Activated CD4-positive, alpha-beta memory T cell treated with anti-CD3 and anti-CD28 coated beads for 36 hours (primary cell): ENCODE measurements at regions of chr17 and their contacts with region 1.

Region 1: GRCh38 chr17:42517516-42517915 is 18.5 kb upstream of the NAGLU start:
- DNase-seq: peak; percentile 88
- H3K4me3 Mint-ChIP-seq: no peak overlapping the region
- H3K27ac Mint-ChIP-seq: no peak overlapping the region
- H3K4me1 Mint-ChIP-seq: no peaks in the 10 kb centered on the region
- H3K27me3 Mint-ChIP-seq: no peaks in the 10 kb centered on the region

Region 2: DNA sequence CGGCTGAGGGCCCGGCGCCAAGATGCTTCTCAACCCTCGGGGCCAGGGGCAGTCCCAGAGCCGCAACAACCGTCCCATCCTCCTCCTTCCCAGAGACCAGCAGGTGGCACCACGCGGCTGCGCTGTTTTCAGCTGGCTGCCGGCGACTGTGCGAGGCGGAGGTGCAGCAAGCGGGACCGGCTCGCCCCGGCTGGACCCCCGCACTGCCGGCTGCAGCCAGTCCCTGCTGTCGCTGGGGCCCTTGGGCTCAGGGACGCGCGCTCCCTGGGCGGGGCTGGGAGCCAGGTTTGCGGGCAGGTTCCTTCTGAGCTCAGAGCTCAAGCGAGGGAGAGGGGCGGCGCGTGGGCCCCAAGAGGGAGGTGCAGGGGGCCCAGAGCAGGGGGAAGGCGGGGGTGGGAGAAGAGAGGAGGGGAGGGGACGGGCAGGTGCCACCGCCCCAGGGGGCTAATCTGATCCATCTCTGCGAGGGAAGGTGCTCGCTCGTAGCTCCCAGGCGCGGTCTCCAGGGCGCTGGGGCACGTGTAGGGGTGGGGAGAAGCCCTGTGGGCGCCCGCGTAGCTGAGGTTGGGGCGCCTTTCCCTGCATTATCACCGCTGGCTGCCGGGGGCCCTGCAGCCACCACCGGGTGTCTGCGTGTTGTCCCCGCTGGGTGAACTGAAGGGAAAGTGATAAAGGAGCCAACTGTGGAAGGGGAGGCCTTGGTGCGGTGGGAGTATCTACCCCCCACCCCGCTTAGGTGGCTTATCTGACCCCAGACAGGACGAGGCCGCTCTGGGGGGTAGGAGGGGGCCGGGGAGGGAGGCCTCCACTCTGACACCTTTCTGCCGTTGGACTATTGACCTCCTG is 205.0 kb before region 1 on chr17:
- CTCF ChIA-PET with region 1: interaction called, 5 read pairs
- POLR2A ChIA-PET with region 1: no interaction called
- intact Hi-C with region 1: loop called (anchors 5 kb)
- DNase-seq: peak; percentile 92
- H3K4me3 Mint-ChIP-seq: peak overlapping the region; percentile 42
- H3K27ac Mint-ChIP-seq: peak overlapping the region; percentile 74
- H3K4me1 Mint-ChIP-seq: peaks cover 76% of the 10 kb centered on the region
- H3K27me3 Mint-ChIP-seq: no peaks in the 10 kb centered on the region

Region 3: GRCh38 chr17:42414704-42415409 is 102.7 kb before region 1 on chr17:
- CTCF ChIA-PET with region 1: interaction called, 13 read pairs
- POLR2A ChIA-PET with region 1: no interaction called
- intact Hi-C with region 1: no loop called
- DNase-seq: peak; percentile 87
- H3K4me3 Mint-ChIP-seq: peak overlapping the region; percentile 49
- H3K27ac Mint-ChIP-seq: peak overlapping the region; percentile 69
- H3K4me1 Mint-ChIP-seq: peaks cover 17% of the 10 kb centered on the region
- H3K27me3 Mint-ChIP-seq: no peaks in the 10 kb centered on the region

Region 4: DNA sequence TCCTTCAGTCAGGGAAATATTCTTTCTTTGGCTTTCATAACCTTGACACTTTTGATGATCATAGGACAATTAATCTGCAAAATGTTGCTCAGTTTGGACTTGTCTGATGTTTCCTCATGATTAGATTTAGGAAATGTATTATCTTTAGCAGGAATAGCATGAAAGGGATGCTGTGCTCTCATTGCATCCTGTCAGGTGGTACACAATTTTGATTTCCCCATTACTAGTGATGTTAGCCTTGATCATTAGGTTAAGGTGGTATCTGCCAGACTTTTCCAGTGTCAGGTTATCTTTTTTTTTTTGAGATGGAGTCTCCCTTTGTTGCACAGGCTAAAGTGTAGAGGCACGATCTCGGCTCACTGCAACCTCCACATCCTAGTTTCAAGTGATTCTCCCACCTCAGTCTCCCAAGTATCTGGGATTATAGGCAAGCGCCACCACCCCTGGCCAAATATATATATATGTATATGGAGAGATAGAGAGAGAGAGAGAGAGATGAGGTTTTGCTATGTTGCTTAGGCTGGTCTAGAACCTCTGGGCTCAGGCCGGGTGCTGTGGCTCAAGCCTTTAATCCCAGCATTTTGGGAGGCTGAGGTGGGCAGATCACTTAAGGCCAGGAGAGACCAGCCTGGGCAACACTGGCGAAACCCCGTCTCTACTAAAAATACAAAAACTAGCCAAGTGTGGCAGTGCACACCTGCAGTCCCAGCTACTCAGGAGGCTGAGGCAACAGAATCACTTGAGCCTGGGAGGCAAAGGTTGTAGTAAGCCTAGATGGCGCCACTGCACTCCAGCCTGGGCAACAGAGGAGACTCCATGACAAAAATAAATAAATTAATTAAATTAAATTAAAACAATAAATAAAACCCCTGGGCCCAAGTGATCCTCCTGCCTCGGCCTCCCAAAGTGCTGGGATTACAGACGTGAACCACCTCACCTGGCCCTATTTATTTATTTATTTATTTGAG is 78.6 kb before region 1 on chr17:
- CTCF ChIA-PET with region 1: interaction called, 29 read pairs
- POLR2A ChIA-PET with region 1: no interaction called
- intact Hi-C with region 1: no loop called
- DNase-seq: peak; percentile 57
- H3K4me3 Mint-ChIP-seq: no peak overlapping the region
- H3K27ac Mint-ChIP-seq: no peak overlapping the region
- H3K4me1 Mint-ChIP-seq: peaks cover 3% of the 10 kb centered on the region
- H3K27me3 Mint-ChIP-seq: peaks cover 2% of the 10 kb centered on the region

Region 5: DNA sequence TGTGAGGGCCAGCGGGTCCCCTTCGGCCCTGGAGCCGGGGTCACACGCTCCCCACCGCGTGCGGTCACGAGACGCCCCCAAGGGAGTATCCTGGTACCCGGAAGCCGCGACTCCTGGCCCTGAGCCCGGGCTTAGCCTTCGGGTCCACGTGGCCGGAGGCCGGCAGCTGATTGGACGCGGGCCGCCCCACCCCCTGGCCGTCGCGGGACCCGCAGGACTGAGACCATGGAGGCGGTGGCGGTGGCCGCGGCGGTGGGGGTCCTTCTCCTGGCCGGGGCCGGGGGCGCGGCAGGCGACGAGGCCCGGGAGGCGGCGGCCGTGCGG is 18.5 kb after region 1 on chr17 and contains the start of gene NAGLU:
- CTCF ChIA-PET with region 1: interaction called, 11 read pairs
- POLR2A ChIA-PET with region 1: no interaction called
- intact Hi-C with region 1: no loop called
- DNase-seq: peak; percentile 91
- H3K4me3 Mint-ChIP-seq: peak within 1 kb of the TSS; percentile 87
- H3K27ac Mint-ChIP-seq: peak within 1 kb of the TSS; percentile 74
- H3K4me1 Mint-ChIP-seq: peaks cover 32% of the 10 kb centered on the region
- H3K27me3 Mint-ChIP-seq: peaks cover 4% of the 10 kb centered on the region
- total RNA-seq, gene NAGLU: 12.2 to 13.9 TPM

Region 6: DNA sequence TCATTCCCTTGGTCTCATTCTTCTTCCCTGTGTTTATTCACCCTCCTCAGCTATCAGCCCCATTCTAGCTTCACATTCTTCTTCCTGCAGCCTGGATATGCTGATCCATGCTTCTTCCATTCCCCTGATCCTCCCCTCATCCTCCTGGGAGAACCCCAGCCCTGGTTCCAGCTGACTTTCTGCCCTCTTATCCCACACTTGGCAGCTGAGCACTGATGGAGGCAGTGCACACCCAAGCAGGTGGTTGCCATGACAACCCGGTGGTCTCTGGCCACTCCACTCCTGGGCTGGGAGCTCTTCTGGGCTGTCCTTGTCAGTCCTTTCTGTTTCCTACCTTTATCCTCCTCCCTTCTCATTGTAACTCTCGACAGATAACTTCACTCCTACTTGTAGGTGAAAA is 124.8 kb after region 1 on chr17:
- CTCF ChIA-PET with region 1: no interaction called
- POLR2A ChIA-PET with region 1: no interaction called
- intact Hi-C with region 1: no loop called
- DNase-seq: no peak
- H3K4me3 Mint-ChIP-seq: no peak overlapping the region
- H3K27ac Mint-ChIP-seq: no peak overlapping the region
- H3K4me1 Mint-ChIP-seq: no peaks in the 10 kb centered on the region
- H3K27me3 Mint-ChIP-seq: peaks cover 7% of the 10 kb centered on the region